Activated B cell treated with CpG ODN at 0.5 μM for 24 hours (primary cell): ENCODE measurements at regions of chr3 and their contacts with region 1.

Region 1: GRCh38 chr3:182713743-182714517 is 79.4 kb upstream of the ATP11B start:
- DNase-seq: no peak
- ATAC-seq: peak; percentile 58
- H3K4me3 Mint-ChIP-seq: no peak overlapping the region
- H3K27ac Mint-ChIP-seq: no peak overlapping the region
- H3K4me1 Mint-ChIP-seq: peaks cover 5% of the 10 kb centered on the region
- H3K27me3 Mint-ChIP-seq: peaks cover 5% of the 10 kb centered on the region
- CTCF ChIP-seq: no peak

Region 2: DNA sequence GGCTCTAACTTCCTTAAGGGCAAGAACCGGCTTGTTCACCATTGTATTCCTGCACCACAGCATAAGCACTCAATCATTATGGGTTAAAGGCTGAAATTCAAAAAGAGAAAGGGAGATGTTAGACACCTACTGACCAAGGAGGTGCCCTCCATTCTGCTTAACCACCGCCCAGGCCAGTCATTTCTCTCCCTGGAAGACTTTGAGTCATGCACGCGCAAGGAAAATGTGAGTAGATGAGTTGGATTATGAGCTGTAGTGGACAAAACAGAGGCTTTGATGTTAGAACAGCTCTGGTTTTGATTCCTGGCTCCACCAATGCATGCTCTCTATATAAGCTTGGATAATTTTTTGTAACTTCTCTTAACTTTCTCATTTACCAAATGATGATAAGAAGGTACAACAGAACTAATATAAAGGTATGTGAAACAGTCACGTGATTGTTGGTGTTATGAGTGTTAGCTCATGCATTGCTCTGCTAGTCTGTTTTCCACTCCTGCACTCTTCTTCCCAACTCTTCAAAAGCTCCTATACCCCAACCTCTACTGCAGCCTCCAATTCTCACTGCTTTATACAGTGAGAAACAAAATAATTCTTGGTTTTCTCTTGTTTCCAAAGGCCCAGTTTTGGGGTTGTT is 69.0 kb before region 1 on chr3:
- CTCF ChIA-PET with region 1: no interaction called
- POLR2A ChIA-PET with region 1: no interaction called
- intact Hi-C with region 1: no loop called
- DNase-seq: no peak
- ATAC-seq: no peak
- H3K4me3 Mint-ChIP-seq: no peak overlapping the region
- H3K27ac Mint-ChIP-seq: no peak overlapping the region
- H3K4me1 Mint-ChIP-seq: no peaks in the 10 kb centered on the region
- H3K27me3 Mint-ChIP-seq: peaks cover 5% of the 10 kb centered on the region
- CTCF ChIP-seq: no peak

Region 3: DNA sequence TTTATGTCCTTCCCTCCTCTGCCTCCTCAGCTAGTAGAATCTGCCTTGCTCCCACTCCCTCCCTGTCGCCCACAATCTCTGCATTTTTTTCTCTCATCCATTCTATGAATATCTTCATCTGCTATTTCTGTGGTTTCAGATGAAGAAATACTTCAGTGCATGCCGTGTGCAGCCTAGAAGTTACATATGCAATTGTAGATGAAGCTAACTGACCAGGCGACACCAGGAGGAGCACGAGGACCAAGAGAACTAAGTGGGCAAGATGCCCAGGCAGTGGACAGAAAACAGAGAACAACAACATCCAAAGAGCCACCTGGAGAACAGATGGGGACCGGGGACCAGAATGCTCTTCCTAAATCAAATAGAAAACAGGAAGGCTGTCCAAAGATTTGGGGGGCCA is 42.0 kb before region 1 on chr3:
- CTCF ChIA-PET with region 1: no interaction called
- POLR2A ChIA-PET with region 1: no interaction called
- intact Hi-C with region 1: no loop called
- DNase-seq: no peak
- ATAC-seq: no peak
- H3K4me3 Mint-ChIP-seq: no peak overlapping the region
- H3K27ac Mint-ChIP-seq: no peak overlapping the region
- H3K4me1 Mint-ChIP-seq: no peaks in the 10 kb centered on the region
- H3K27me3 Mint-ChIP-seq: peaks cover 9% of the 10 kb centered on the region
- CTCF ChIP-seq: no peak

Region 4: GRCh38 chr3:182739619-182740018 is 25.7 kb after region 1 on chr3:
- CTCF ChIA-PET with region 1: no interaction called
- POLR2A ChIA-PET with region 1: no interaction called
- intact Hi-C with region 1: no loop called
- DNase-seq: no peak
- ATAC-seq: no peak
- H3K4me3 Mint-ChIP-seq: no peak overlapping the region
- H3K27ac Mint-ChIP-seq: no peak overlapping the region
- H3K4me1 Mint-ChIP-seq: no peaks in the 10 kb centered on the region
- H3K27me3 Mint-ChIP-seq: peaks cover 13% of the 10 kb centered on the region
- CTCF ChIP-seq: no peak

Region 5: GRCh38 chr3:182837855-182838454 is 124.0 kb after region 1 on chr3:
- CTCF ChIA-PET with region 1: interaction called, 95 read pairs
- POLR2A ChIA-PET with region 1: no interaction called
- intact Hi-C with region 1: loop called (anchors 1 kb)
- DNase-seq: no peak
- ATAC-seq: no peak
- H3K4me3 Mint-ChIP-seq: no peak overlapping the region
- H3K27ac Mint-ChIP-seq: no peak overlapping the region
- H3K4me1 Mint-ChIP-seq: no peaks in the 10 kb centered on the region
- H3K27me3 Mint-ChIP-seq: no peaks in the 10 kb centered on the region
- CTCF ChIP-seq: no peak

Region 6: GRCh38 chr3:182843478-182843877 is 129.5 kb after region 1 on chr3:
- CTCF ChIA-PET with region 1: interaction called, 20 read pairs
- POLR2A ChIA-PET with region 1: no interaction called
- intact Hi-C with region 1: loop called (anchors 1 kb)
- DNase-seq: no peak
- ATAC-seq: no peak
- H3K4me3 Mint-ChIP-seq: no peak overlapping the region
- H3K27ac Mint-ChIP-seq: no peak overlapping the region
- H3K4me1 Mint-ChIP-seq: no peaks in the 10 kb centered on the region
- H3K27me3 Mint-ChIP-seq: no peaks in the 10 kb centered on the region
- CTCF ChIP-seq: no peak

Region 7: GRCh38 chr3:182909318-182910040 is 195.5 kb after region 1 on chr3:
- CTCF ChIA-PET with region 1: no interaction called
- POLR2A ChIA-PET with region 1: no interaction called
- intact Hi-C with region 1: loop called (anchors 10 kb)
- DNase-seq: no peak
- ATAC-seq: no peak
- H3K4me3 Mint-ChIP-seq: no peak overlapping the region
- H3K27ac Mint-ChIP-seq: no peak overlapping the region
- H3K4me1 Mint-ChIP-seq: peaks cover 4% of the 10 kb centered on the region
- H3K27me3 Mint-ChIP-seq: no peaks in the 10 kb centered on the region
- CTCF ChIP-seq: no peak

Region 8: GRCh38 chr3:183044547-183045229 is 330.8 kb after region 1 on chr3:
- CTCF ChIA-PET with region 1: no interaction called
- POLR2A ChIA-PET with region 1: no interaction called
- intact Hi-C with region 1: loop called (anchors 10 kb)
- DNase-seq: no peak
- ATAC-seq: no peak
- H3K4me3 Mint-ChIP-seq: no peak overlapping the region
- H3K27ac Mint-ChIP-seq: peak overlapping the region; percentile 36
- H3K4me1 Mint-ChIP-seq: peaks cover 36% of the 10 kb centered on the region
- H3K27me3 Mint-ChIP-seq: no peaks in the 10 kb centered on the region
- CTCF ChIP-seq: no peak

Region 9: DNA sequence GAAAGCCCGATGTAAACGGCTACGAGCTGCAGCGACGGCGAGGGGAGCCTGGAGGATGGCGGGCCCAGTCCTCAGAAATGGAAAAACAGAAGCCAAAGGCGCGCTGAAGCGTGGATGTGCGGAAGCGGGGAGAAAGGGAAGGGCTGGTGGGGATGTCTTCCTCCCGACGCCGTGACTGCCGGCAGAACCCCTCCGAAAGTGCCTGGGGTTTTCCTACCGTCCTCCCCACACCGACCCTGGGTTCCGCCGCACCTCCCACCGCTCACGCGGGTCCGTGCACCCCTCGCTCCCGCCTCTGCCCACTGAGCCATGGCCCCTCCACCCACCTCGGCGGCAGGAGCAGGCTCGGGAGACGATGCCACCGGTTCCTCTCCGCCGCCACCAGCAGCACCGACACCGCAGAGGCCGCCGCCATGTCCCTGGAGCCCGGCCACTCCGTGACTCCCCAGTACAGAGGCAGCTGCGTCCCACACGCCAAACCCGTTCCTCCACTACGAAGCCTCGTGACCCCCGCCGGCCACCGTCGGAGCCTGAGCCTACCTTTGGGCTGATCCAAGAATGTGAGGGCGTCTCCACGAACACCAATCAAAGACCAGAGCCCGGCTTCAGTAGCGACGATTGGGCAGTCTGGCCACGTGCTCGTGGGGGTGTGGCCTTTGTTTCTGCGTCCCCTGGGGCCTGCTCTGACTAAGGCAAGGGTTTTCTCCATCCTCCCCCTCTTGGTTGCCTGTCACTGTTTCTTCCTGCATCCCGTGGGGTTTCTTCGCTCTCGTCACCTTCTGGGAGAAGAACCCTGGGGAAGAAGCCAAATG is 385.3 kb after region 1 on chr3 and contains the start of gene MCCC1:
- CTCF ChIA-PET with region 1: no interaction called
- POLR2A ChIA-PET with region 1: no interaction called
- intact Hi-C with region 1: loop called (anchors 10 kb)
- DNase-seq: peak; percentile 91
- ATAC-seq: peak; percentile 96
- H3K4me3 Mint-ChIP-seq: peak within 1 kb of the TSS; percentile 97
- H3K27ac Mint-ChIP-seq: peak within 1 kb of the TSS; percentile 91
- H3K4me1 Mint-ChIP-seq: peaks cover 34% of the 10 kb centered on the region
- H3K27me3 Mint-ChIP-seq: no peaks in the 10 kb centered on the region
- CTCF ChIP-seq: no peak
- total RNA-seq, gene MCCC1: 25.2 and 31.6 TPM in 2 replicates